MCF 10A (cell line): ENCODE measurements at regions of chr9 and their contacts with region 1.

Region 1: GRCh38 chr9:15735083-15735974 is 182.5 kb downstream of the CCDC171 start:
- DNase-seq: peak; percentile 90
- H3K4me3 Mint-ChIP-seq: peak overlapping the region; percentile 44
- H3K27ac Mint-ChIP-seq: peak overlapping the region; percentile 76
- H3K4me1 Mint-ChIP-seq: peaks cover 18% of the 10 kb centered on the region
- H3K27me3 Mint-ChIP-seq: no peaks in the 10 kb centered on the region
- CTCF ChIP-seq: no peak

Region 2: GRCh38 chr9:15697446-15697851 is 37.9 kb before region 1 on chr9:
- CTCF ChIA-PET with region 1: no interaction called
- POLR2A ChIA-PET with region 1: interaction called, 9 read pairs
- intact Hi-C with region 1: loop called (anchors 1 kb)
- DNase-seq: peak; percentile 86
- H3K4me3 Mint-ChIP-seq: no peak overlapping the region
- H3K27ac Mint-ChIP-seq: peak overlapping the region; percentile 81
- H3K4me1 Mint-ChIP-seq: peaks cover 17% of the 10 kb centered on the region
- H3K27me3 Mint-ChIP-seq: no peaks in the 10 kb centered on the region
- CTCF ChIP-seq: no peak